Transverse colon (tissue), 4 donors: ENCODE measurements at regions of chr11 and their contacts with region 1.

Region 1: GRCh38 chr11:61446211-61446651 is 16.3 kb downstream of the SDHAF2 start:
- DNase-seq: peak; percentile 86
- H3K4me3 ChIP-seq: no peak overlapping the region
- H3K27ac ChIP-seq: peak overlapping the region; percentile 63 to 82 (median 66)
- H3K4me1 ChIP-seq: peaks cover 4 to 31% (median 8%) of the 10 kb centered on the region in 4 donors
- H3K27me3 ChIP-seq: no peaks in the 10 kb centered on the region
- CTCF ChIP-seq: peak; percentile 80 to 86 (median 82)
- EP300 ChIP-seq: no peak
- POLR2A ChIP-seq: no peak

Region 2: GRCh38 chr11:61417670-61418069 is 28.6 kb before region 1 on chr11:
- in situ Hi-C with region 1: no loop called
- intact Hi-C with region 1: no loop called
- DNase-seq: no peak
- H3K4me3 ChIP-seq: no peak overlapping the region
- H3K27ac ChIP-seq: no peak overlapping the region
- H3K4me1 ChIP-seq: peaks cover 0 to 2% (median 0%) of the 10 kb centered on the region in 4 donors
- H3K27me3 ChIP-seq: no peaks in the 10 kb centered on the region
- CTCF ChIP-seq: no peak
- EP300 ChIP-seq: no peak
- POLR2A ChIP-seq: no peak

Region 3: DNA sequence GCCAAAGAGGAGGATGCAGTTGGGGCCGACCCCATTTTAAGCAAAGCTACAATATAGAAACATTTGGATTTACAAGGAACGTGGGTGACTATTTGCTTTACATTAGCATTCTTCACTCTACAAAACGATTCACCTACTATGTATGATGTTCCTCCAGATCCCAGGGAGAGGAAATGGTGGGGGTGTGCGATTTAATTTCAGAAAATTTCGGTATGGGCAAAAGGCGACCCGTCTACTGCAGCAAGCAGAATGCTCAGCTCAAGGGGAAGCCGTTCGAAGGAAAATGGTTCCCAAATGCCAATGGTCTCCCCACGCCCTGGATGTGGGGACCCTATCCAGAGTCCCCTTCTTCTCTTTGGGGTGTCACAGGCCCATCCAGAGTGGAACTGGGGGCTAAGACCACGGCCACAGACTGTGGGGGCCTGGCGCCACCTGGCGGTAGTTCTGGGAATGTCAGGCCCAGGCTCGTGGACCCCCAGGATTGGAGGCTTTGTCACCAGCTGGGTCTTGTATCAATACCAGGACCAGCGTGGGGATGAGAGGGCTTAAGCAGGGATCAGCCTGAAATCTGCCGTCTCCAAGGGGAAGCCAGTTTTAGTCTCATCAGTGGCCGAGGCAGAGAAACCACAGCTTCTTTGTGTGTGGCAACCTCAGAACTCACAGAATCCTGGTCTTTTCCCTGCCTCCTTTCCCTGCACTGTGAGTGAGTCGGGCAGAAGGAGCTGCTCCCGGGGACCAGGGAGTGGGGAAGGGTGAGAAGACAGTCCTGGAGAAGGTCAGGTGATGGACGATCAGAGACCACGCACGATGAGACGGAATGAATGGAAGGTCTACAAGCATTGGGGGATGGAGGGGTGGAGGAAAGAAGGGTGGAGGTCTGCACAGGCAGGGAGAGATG is 70.7 kb after region 1 on chr11:
- in situ Hi-C with region 1: no loop called
- intact Hi-C with region 1: loop called (anchors 2 kb)
- DNase-seq: no peak
- H3K4me3 ChIP-seq: no peak overlapping the region
- H3K27ac ChIP-seq: peak overlapping the region in 1 of 4 donors; percentile 19
- H3K4me1 ChIP-seq: peaks cover 4 to 11% (median 6%) of the 10 kb centered on the region in 4 donors
- H3K27me3 ChIP-seq: no peaks in the 10 kb centered on the region
- CTCF ChIP-seq: peak; percentile 96 to 99 (median 98)
- EP300 ChIP-seq: no peak
- POLR2A ChIP-seq: no peak

Region 4: GRCh38 chr11:61587521-61588453 is 141.6 kb after region 1 on chr11:
- in situ Hi-C with region 1: no loop called
- intact Hi-C with region 1: loop called (anchors 5 kb)
- DNase-seq: peak; percentile 81
- H3K4me3 ChIP-seq: peak overlapping the region; percentile 15 to 51 (median 34)
- H3K27ac ChIP-seq: peak overlapping the region; percentile 22 to 58 (median 45)
- H3K4me1 ChIP-seq: peaks cover 4 to 20% (median 15%) of the 10 kb centered on the region in 4 donors
- H3K27me3 ChIP-seq: peaks cover 36% of the 10 kb centered on the region
- CTCF ChIP-seq: peak in 3 of 5 experiments; percentile 17 to 30 (median 24)
- EP300 ChIP-seq: no peak
- POLR2A ChIP-seq: no peak